ENCODE measurements at regions of chr6 and their contacts with region 1.

Region 1: GRCh38 chr6:38187325-38187724 is 367.8 kb downstream of the ZFAND3 start:
- DNase-seq: peak in 1 of 4 experiments; percentile 16
- ATAC-seq: peak; percentile 59
- H3K4me3 ChIP-seq: no peak overlapping the region
- H3K27ac ChIP-seq: no peak overlapping the region
- H3K4me1 ChIP-seq: no peaks in the 10 kb centered on the region
- H3K27me3 ChIP-seq: peaks cover 32 to 63% of the 10 kb centered on the region in 2 experiments
- CTCF ChIP-seq: peak in 1 of 3 experiments; percentile 22; a peak in 1 of 6 replicates
- EP300 ChIP-seq: no peak
- POLR2A ChIP-seq: no peak
- RAD21 ChIP-seq: peak in 1 of 2 experiments; percentile 36; a peak in 2 of 4 replicates

Region 2: DNA sequence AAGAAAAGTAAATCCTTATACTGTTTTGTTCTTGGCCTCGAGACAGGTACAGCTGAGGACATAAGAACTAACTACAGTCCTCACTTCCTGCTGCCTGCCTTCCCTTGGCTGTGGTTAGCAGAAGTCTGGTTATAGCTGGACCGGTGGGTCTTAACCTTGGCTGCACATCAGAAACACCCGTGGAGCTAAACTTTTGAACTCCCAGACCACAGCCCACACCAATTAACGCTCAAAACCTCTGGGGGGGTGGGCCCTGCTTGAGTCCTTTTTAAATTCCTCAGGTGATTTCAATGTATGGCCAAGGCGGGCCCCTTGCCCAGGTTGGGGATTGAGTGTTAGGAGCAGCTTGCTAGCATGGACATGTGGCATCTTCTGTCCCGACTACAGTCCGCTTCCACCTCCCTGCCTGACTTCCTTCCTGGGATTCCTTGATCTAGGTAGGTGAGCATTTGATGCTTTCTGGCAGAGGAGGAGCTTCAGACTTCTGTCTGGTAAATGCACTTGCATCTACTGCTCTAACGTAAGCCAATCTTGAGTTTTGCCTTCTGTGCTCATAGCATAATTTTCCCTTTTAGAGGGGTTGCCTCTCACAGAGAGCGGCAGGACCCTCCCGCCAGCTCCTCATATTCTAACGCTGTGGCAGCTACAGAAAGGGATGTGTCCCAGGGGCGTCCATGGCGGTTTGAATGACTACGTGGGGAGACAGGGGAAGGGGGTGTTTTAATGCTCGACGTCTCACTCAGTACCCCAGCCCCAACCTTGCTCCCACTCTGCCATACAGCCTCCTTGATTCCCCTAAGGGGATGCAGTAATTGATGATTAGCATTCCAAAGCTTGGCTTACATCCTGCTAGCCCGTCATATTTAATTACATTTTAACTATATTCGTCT is 22.3 kb after region 1 on chr6:
- CTCF ChIA-PET with region 1: no interaction called
- POLR2A ChIA-PET with region 1: interaction called, 13 read pairs
- in situ Hi-C with region 1: no loop called
- intact Hi-C with region 1: no loop called
- DNase-seq: no peak
- ATAC-seq: no peak
- H3K4me3 ChIP-seq: no peak overlapping the region
- H3K27ac ChIP-seq: no peak overlapping the region
- H3K4me1 ChIP-seq: no peaks in the 10 kb centered on the region
- H3K27me3 ChIP-seq: peaks cover 17 to 38% of the 10 kb centered on the region in 2 experiments
- CTCF ChIP-seq: no peak
- EP300 ChIP-seq: no peak
- POLR2A ChIP-seq: no peak
- RAD21 ChIP-seq: no peak

Region 3: GRCh38 chr6:38612143-38612965 is 425.0 kb after region 1 on chr6:
- CTCF ChIA-PET with region 1: no interaction called
- POLR2A ChIA-PET with region 1: no interaction called
- in situ Hi-C with region 1: no loop called
- intact Hi-C with region 1: no loop called
- DNase-seq: no peak
- ATAC-seq: no peak
- H3K4me3 ChIP-seq: no peak overlapping the region
- H3K27ac ChIP-seq: no peak overlapping the region
- H3K4me1 ChIP-seq: no peaks in the 10 kb centered on the region
- H3K27me3 ChIP-seq: peaks cover 10 to 18% of the 10 kb centered on the region in 2 experiments; a peak in 4 of 5 replicates
- CTCF ChIP-seq: no peak
- EP300 ChIP-seq: no peak
- POLR2A ChIP-seq: no peak
- RAD21 ChIP-seq: no peak

Measured in K562 (cell line).